ENCODE measurements at regions of chr7 and their contacts with region 1.

Region 1: GRCh38 chr7:94059746-94060145 is 55.6 kb upstream of the BET1 start:
- DNase-seq: peak; percentile 33 to 88 (median 76)
- H3K4me3 ChIP-seq: no peak overlapping the region
- H3K4me3 Mint-ChIP-seq: no peak overlapping the region
- H3K27ac ChIP-seq: no peak overlapping the region
- H3K27ac Mint-ChIP-seq: peak overlapping the region in 2 of 7 donors; percentile 9 to 24
- H3K4me1 ChIP-seq: peaks cover 6 to 11% of the 10 kb centered on the region in 2 donors
- H3K4me1 Mint-ChIP-seq: peaks cover 11% of the 10 kb centered on the region
- H3K27me3 ChIP-seq: peaks cover 24 to 30% of the 10 kb centered on the region in 2 donors
- H3K27me3 Mint-ChIP-seq: peaks cover 15 to 33% (median 28%) of the 10 kb centered on the region in 3 donors
- CTCF ChIP-seq: no peak

Region 2: DNA sequence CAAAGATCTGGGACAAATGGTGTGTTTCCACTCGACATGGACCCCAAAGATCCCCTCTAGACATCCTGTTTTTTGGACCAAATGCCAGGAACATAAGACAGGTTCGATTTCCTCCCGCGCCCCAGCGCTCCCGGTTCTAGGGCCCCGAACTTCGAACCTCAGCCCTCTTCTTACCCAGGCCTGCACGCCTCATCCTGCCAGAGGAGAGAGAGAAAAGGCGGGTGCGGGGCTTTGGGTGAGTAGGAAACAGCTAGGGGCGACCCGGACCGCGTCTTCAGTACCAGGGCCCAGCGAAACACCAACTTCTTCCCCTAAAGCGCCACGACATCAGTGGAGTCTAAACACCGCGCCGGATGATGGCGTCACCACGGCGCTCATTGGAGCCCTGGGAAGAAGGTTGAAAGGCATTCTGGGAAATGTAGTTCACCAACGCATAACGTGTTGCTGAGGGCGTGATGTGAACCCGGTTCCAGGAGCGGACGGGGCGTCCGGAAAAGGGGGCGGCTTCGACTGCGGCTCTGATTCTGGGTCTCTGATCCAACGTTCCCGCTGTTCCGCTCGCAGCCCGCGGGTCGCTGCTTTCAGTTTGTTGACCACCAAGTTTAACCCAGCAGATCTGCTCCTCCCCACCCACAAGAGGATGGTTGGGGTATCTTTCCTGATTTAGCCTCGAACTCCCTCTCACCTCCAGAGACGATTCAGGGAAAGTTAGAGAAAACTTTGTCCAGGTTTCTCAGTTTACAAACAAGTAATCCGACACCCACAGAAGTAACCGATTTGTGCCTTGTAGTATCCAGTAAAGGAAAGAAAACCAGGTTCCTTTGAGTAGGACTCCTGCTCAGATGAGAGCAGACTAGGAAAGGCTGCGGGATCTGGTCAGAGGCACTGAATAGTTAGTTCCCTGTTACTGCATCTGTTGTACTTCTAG is 55.5 kb before region 1 on chr7 and contains the start of gene BET1:
- intact Hi-C with region 1: loop called in 1 of 2 experiments (anchors 10 kb)
- DNase-seq: peak; percentile 95 to 98 (median 96)
- H3K4me3 ChIP-seq: peak within 1 kb of the TSS; percentile 61 to 98 (median 84)
- H3K4me3 Mint-ChIP-seq: peak within 1 kb of the TSS; percentile 99
- H3K27ac ChIP-seq: peak within 1 kb of the TSS; percentile 77 to 93
- H3K27ac Mint-ChIP-seq: peak within 1 kb of the TSS; percentile 95 to 100 (median 99)
- H3K4me1 ChIP-seq: peaks cover 14 to 21% of the 10 kb centered on the region in 2 donors
- H3K4me1 Mint-ChIP-seq: peaks cover 25% of the 10 kb centered on the region
- H3K27me3 ChIP-seq: peaks cover 16 to 26% of the 10 kb centered on the region in 2 donors
- H3K27me3 Mint-ChIP-seq: peaks cover 4 to 20% (median 17%) of the 10 kb centered on the region in 3 donors
- CTCF ChIP-seq: no peak
- polyA plus RNA-seq, gene BET1: 5.4 to 14.1 (median 8.2) TPM

Region 3: DNA sequence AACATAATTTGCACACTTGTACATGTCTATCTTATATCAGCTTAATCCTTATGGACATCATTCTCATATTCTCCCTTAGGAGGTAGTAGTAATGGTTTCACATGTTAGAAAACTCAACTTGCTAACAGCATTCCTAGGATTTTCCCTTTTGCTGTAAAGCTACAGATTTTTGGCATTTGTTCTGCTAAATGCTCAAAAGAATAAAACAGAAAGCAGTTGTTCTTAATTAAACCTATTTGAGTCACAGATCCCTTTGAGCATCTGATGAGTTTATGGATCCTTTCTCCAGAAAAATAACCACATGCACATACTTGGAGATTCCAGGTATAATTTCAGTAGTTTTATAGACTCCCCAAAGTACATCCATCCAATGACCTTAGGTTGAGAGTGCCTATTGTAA is 67.3 kb after region 1 on chr7:
- intact Hi-C with region 1: no loop called
- DNase-seq: no peak
- H3K4me3 ChIP-seq: no peak overlapping the region
- H3K4me3 Mint-ChIP-seq: no peak overlapping the region
- H3K27ac ChIP-seq: no peak overlapping the region
- H3K27ac Mint-ChIP-seq: no peak overlapping the region
- H3K4me1 ChIP-seq: no peaks in the 10 kb centered on the region
- H3K4me1 Mint-ChIP-seq: no peaks in the 10 kb centered on the region
- H3K27me3 ChIP-seq: no peaks in the 10 kb centered on the region
- H3K27me3 Mint-ChIP-seq: peaks cover 0 to 3% (median 2%) of the 10 kb centered on the region in 3 donors
- CTCF ChIP-seq: no peak